Activated CD4-positive, alpha-beta T cell treated with anti-CD3 and anti-CD28 coated beads, Interleukin-2, amount 10 ng/mL, durations not matched to agents 24 days and 14 days (primary cell): ENCODE measurements at regions of chr3 and their contacts with region 1.

Region 1: DNA sequence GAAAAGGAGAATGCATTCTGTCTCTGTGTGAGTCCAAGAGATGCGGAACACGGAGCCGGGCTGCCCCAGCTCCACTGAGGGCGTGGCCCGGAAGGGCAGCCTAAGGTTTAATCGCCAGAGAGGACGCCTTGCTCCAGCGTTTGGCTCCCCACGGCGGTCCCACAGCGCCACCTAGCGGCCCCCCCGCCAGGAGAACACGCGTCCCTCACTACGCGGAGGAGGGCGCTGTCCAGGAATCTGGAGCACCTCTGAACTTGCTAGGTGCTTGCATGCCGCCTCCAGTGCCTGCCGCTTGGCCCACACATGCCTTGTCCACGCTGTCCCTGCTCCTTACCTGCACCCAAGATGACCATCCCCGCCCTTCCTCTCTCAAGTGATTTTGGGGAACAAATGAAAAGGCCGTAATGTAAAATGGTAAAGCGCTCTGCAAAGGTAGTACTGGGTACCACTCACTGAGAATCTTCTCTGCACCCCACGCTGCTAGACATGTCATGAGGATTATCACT is 14.4 kb upstream of the MRPS22 start:
- DNase-seq: peak; percentile 96
- H3K4me3 Mint-ChIP-seq: peak overlapping the region; percentile 73
- H3K27ac Mint-ChIP-seq: no peak overlapping the region
- H3K4me1 Mint-ChIP-seq: peaks cover 11% of the 10 kb centered on the region
- H3K27me3 Mint-ChIP-seq: peaks cover 30% of the 10 kb centered on the region

Region 2: GRCh38 chr3:138890555-138891187 is 438.7 kb before region 1 on chr3:
- intact Hi-C with region 1: no loop called
- DNase-seq: no peak
- H3K4me3 Mint-ChIP-seq: no peak overlapping the region
- H3K27ac Mint-ChIP-seq: no peak overlapping the region
- H3K4me1 Mint-ChIP-seq: peaks cover 2% of the 10 kb centered on the region
- H3K27me3 Mint-ChIP-seq: no peaks in the 10 kb centered on the region

Region 3: GRCh38 chr3:138935848-138936740 is 393.3 kb before region 1 on chr3:
- intact Hi-C with region 1: loop called (anchors 2 kb)
- DNase-seq: peak; percentile 91
- H3K4me3 Mint-ChIP-seq: peak overlapping the region; percentile 76
- H3K27ac Mint-ChIP-seq: no peak overlapping the region
- H3K4me1 Mint-ChIP-seq: peaks cover 14% of the 10 kb centered on the region
- H3K27me3 Mint-ChIP-seq: peaks cover 76% of the 10 kb centered on the region

Region 4: DNA sequence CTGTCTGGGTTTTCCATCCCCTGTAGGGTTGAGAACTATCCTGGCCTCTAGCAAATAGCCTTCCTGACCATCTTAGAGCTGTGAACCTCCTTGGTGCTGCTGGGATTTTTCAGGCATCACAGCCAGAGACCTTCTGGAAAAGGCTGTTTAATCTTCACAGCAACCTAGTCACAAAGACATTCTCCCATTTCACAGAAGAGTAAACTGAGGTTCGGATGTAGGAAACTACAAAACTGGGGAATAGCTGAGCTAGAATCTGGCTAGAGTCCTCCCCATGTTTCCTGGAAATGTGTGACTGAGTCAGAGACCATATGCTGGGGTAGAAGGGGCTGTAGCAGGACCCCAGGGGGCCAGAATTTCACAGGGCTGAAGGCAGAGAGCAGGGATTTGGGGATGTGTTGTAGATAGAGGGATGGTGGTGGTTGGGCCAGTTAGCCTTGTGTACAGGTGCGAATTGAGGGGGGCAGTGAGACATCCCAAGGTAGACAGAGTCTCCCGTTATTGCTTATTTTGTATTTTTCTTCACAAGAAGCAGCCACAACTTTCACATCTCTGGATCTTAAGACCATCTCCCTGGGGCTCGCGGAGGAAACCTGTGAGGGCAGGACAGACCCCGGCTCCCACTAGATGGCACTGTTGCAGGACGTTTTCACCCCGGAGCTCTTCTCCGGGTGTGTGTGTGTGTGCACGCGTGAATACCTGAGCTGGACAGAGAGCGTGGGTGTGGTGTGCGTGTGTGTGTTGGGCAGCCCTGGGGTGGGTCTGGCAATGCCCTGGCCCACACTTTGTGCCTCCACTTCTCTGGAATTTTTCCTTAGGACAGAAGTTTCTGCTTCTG is 217.8 kb before region 1 on chr3:
- intact Hi-C with region 1: loop called (anchors 2 kb)
- DNase-seq: peak; percentile 87
- H3K4me3 Mint-ChIP-seq: no peak overlapping the region
- H3K27ac Mint-ChIP-seq: no peak overlapping the region
- H3K4me1 Mint-ChIP-seq: peaks cover 4% of the 10 kb centered on the region
- H3K27me3 Mint-ChIP-seq: peaks cover 2% of the 10 kb centered on the region

Region 5: DNA sequence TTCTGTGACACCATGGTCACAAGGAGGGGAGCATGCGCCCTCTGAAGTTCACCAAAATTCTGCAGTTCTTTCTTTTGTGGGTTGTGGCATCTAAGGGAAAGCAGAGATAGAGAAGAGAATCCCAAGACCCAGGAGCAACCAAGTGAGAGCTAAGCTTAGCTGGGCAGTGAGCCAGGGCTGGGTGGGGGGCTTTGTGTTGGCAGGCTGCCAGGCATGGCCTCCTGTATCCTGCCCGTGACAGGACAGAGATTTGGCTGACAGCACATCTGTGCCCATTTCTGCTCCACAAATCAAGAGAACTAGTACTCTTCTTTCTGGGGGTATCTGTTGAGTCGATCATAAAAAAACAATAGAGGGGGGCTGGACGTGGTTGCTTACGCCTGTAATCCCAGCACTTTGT is 282.1 kb after region 1 on chr3:
- intact Hi-C with region 1: no loop called
- DNase-seq: no peak
- H3K4me3 Mint-ChIP-seq: no peak overlapping the region
- H3K27ac Mint-ChIP-seq: no peak overlapping the region
- H3K4me1 Mint-ChIP-seq: no peaks in the 10 kb centered on the region
- H3K27me3 Mint-ChIP-seq: no peaks in the 10 kb centered on the region